H1 (cell line): ENCODE measurements at regions of chr12 and their contacts with region 1.

Region 1: DNA sequence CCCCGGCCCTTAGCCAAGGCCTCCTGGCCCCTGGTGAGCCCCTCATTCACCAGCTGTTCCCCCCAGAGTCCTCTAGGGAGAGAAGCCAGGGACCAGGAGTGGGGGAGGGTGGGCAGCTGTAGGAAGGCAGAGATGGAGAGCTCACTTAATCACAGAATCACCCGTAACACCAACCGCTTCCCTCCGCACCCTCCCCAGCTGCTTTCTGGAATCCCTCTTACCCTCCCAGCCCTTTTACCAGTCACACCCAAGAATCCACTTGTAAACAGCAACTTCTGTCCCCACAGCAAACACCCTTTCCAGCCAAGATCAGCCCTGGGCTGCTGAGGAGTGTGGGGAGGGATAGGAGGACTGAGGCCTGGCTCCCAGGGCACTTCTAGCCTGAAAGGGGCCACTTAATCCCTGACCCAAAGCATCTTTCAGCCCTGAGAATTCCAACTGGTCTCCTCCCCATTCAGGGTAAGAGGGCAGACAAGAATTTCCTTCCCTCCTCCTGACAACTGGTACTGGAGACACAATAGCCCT is 18.8 kb downstream of the NCKAP5L start:
- DNase-seq: no peak
- H3K4me3 ChIP-seq: peak overlapping the region in 1 of 4 experiments; percentile 13; a peak in 3 of 8 replicates
- H3K27ac ChIP-seq: peak overlapping the region; percentile 62
- H3K4me1 ChIP-seq: peaks cover 16 to 35% (median 22%) of the 10 kb centered on the region in 4 experiments
- H3K27me3 ChIP-seq: no peaks in the 10 kb centered on the region
- CTCF ChIP-seq: no peak
- EP300 ChIP-seq: no peak
- POLR2A ChIP-seq: no peak
- RAD21 ChIP-seq: no peak

Region 2: DNA sequence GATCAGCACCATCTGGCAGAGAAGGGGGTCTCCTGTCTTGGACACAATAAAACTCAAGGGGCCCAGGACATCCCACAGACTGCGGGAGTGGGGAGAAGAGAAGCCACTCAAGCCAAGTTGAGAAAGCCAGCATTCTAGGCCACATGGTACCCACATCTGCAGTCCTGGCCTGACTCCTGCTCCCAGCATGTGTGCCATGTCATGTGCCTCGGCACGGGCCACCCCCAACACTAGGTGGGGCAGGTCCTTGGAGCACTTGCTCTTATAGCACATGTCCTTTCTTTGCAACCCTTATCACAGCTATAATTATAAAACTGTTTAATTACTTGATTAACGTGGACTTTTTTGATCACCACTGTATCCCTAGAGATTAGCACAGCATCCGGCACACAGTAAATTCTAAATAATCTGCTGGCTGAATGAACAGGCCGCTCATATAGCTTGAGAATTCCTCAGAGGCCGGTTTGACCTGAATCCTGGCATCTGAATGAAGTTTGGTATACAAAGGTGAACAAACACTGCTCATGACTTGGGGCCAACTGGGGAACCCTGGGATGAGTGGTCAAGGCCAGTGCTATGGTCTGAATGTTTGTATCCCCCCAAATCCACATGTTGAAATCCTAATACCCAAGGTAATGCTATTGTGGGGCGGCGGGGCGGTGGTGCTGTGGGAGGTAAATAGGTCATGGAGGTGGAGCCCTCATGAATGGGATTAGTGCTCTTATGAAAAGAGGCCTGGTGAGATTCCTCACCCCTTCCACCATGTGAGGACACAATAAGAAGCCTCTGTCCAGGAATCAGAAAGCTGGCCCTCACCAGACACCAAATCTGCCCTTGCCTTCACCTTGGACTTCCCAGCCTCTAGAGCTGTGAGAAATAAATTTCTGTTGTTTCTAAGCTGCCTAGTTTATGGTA is 12.2 kb after region 1 on chr12:
- CTCF ChIA-PET with region 1: interaction called, 13 read pairs
- POLR2A ChIA-PET with region 1: interaction called, 59 read pairs
- DNase-seq: no peak
- H3K4me3 ChIP-seq: no peak overlapping the region
- H3K27ac ChIP-seq: no peak overlapping the region
- H3K4me1 ChIP-seq: peaks cover 5 to 25% (median 15%) of the 10 kb centered on the region in 4 experiments
- H3K27me3 ChIP-seq: no peaks in the 10 kb centered on the region
- CTCF ChIP-seq: peak in 1 of 3 experiments; percentile 2; a peak in 1 of 4 replicates
- EP300 ChIP-seq: no peak
- POLR2A ChIP-seq: no peak
- RAD21 ChIP-seq: no peak